Endothelial cell of umbilical vein (primary cell): ENCODE measurements at regions of chr4 and their contacts with region 1.

Region 1: GRCh38 chr4:77095101-77095821 is 19.5 kb upstream of the CCNI start:
- DNase-seq: peak; percentile 68
- H3K4me3 ChIP-seq: no peak overlapping the region
- H3K27ac ChIP-seq: no peak overlapping the region
- H3K4me1 ChIP-seq: peaks cover 24% of the 10 kb centered on the region
- H3K27me3 ChIP-seq: peaks cover 0 to 4% of the 10 kb centered on the region in 2 experiments
- CTCF ChIP-seq: peak; percentile 85 to 92
- POLR2A ChIP-seq: no peak

Region 2: DNA sequence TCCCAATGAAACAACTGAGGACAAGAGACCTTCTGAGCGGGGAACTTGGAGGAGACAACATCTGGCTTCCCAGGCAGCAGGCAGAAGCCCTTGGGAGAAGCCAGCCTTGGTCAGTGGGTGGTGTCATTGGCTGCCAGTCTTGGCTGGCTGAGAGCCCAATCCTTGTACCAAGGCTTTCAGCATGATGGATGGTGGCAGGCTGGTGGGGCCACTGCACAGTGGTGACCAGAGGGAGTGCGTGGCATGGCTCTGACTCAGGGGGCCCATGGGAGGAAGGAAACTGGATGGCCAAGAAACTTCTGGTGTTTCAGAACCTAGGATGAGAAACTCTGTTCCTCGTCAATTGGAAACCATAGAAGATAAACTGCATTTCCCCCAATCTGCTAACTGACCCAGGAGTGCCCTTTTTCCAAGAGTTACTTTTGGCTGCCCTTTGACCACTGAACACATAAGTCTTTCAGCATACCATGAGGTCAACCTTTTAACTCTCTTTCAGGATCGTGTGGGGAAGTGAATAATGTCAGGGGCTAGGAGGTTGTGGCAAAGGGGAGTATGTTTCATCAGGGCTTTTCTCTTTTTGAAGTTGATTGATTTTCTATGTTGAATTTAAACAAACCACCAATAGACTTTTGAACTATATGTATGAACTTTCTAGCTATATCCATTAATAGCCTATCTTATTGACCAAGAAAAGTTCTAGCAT is 258.2 kb before region 1 on chr4:
- CTCF ChIA-PET with region 1: no interaction called
- POLR2A ChIA-PET with region 1: no interaction called
- dilution Hi-C with region 1: no loop called
- intact Hi-C with region 1: no loop called
- DNase-seq: no peak
- H3K4me3 ChIP-seq: no peak overlapping the region
- H3K27ac ChIP-seq: no peak overlapping the region
- H3K4me1 ChIP-seq: peaks cover 3% of the 10 kb centered on the region
- H3K27me3 ChIP-seq: no peaks in the 10 kb centered on the region
- CTCF ChIP-seq: no peak
- POLR2A ChIP-seq: no peak

Region 3: DNA sequence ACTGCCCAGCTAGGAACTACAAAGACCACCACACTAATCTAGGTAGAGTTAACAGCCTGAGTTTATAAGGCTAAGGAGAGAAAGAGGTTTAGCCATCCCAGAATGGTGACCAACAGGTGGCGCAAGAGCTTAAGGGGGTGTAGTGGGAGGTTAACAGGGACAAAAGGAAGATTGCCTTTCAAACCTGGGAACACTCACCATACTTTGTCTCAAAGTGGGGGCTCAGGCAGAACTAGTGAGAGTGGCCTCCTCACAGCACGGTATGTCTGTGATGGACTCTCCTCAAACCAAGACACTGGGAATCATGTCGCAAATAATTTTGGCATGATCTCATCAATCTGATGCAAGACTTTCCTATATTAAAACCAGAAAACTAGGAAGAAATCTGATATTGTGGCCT is 42.9 kb before region 1 on chr4:
- CTCF ChIA-PET with region 1: interaction called, 12 read pairs
- POLR2A ChIA-PET with region 1: interaction called, 6 read pairs
- dilution Hi-C with region 1: no loop called
- intact Hi-C with region 1: no loop called
- DNase-seq: peak; percentile 58
- H3K4me3 ChIP-seq: no peak overlapping the region
- H3K27ac ChIP-seq: no peak overlapping the region
- H3K4me1 ChIP-seq: peaks cover 3% of the 10 kb centered on the region
- H3K27me3 ChIP-seq: no peaks in the 10 kb centered on the region
- CTCF ChIP-seq: peak; percentile 66 to 70
- POLR2A ChIP-seq: no peak

Region 4: GRCh38 chr4:77075869-77076799 is 19.1 kb before region 1 on chr4 and contains the start of gene CCNI:
- CTCF ChIA-PET with region 1: interaction called, 71 read pairs
- POLR2A ChIA-PET with region 1: interaction called, 4 read pairs
- dilution Hi-C with region 1: no loop called
- intact Hi-C with region 1: loop called (anchors 1 kb)
- DNase-seq: peak; percentile 99
- H3K4me3 ChIP-seq: peak within 1 kb of the TSS; percentile 83 to 98 (median 90)
- H3K27ac ChIP-seq: peak within 1 kb of the TSS; percentile 98
- H3K4me1 ChIP-seq: peaks cover 22% of the 10 kb centered on the region
- H3K27me3 ChIP-seq: no peaks in the 10 kb centered on the region
- CTCF ChIP-seq: no peak
- POLR2A ChIP-seq: peak; percentile 94
- total RNA-seq, gene CCNI: 212 and 227 TPM in 2 replicates

Region 5: GRCh38 chr4:77110730-77111129 is 15.5 kb after region 1 on chr4:
- CTCF ChIA-PET with region 1: interaction called, 14 read pairs
- POLR2A ChIA-PET with region 1: no interaction called
- dilution Hi-C with region 1: no loop called
- intact Hi-C with region 1: no loop called
- DNase-seq: no peak
- H3K4me3 ChIP-seq: no peak overlapping the region
- H3K27ac ChIP-seq: no peak overlapping the region
- H3K4me1 ChIP-seq: no peaks in the 10 kb centered on the region
- H3K27me3 ChIP-seq: peaks cover 23 to 30% of the 10 kb centered on the region in 2 experiments
- CTCF ChIP-seq: no peak
- POLR2A ChIP-seq: no peak

Region 6: DNA sequence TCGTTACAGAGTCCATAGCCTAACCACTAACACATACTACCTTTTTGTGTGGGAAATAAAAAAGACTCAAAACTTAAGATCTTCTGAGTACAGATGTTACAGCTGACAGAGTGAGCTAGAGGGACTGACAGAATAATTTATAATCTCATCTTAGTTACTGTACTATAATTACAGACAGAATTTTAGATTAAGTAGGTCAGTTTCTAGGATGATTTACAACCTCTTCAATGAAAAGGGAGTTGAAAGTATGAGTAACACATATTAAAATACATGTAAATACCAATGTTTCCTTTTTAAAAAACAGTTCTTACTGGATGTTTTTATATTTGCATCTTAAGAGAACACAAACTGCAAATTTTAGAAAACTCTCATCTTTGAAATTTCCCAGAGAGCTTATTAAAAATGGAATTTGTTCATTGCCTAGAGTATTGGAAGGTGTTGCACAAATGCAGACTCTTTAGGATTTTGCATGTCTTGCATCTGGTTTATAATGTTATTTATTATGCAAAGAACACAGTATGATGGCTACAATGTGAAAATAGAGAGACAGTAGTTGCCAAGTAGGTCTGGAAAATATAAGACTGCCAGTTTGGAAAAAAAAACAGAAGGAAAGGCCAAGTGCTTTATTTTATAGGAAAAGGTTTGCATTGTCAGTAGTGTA is 37.5 kb after region 1 on chr4:
- CTCF ChIA-PET with region 1: interaction called, 20 read pairs
- POLR2A ChIA-PET with region 1: no interaction called
- dilution Hi-C with region 1: no loop called
- intact Hi-C with region 1: no loop called
- DNase-seq: no peak
- H3K4me3 ChIP-seq: no peak overlapping the region
- H3K27ac ChIP-seq: no peak overlapping the region
- H3K4me1 ChIP-seq: peaks cover 3% of the 10 kb centered on the region
- H3K27me3 ChIP-seq: peaks cover 13 to 18% of the 10 kb centered on the region in 2 experiments
- CTCF ChIP-seq: no peak
- POLR2A ChIP-seq: no peak

Region 7: DNA sequence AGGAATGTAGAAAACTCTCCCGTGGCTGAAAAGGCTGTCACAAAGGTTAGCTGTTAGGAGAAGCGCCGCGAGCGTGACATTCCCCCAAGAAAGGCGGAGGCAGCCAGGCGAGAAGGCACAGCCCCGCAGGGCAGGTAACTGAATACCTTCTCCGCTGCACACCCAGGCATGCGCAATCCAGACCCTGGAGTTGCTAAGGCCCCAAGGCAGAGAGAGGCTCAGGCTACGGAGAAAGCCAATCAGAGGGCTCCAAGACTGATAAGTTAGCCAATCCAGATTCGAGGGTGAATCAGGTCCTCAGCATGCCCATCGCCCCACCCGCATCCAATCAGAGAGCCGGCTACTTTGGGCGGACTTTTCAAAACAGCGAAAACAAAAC is 61.3 kb after region 1 on chr4:
- CTCF ChIA-PET with region 1: interaction called, 63 read pairs
- POLR2A ChIA-PET with region 1: interaction called, 4 read pairs
- dilution Hi-C with region 1: no loop called
- intact Hi-C with region 1: loop called (anchors 1 kb)
- DNase-seq: peak; percentile 99
- H3K4me3 ChIP-seq: peak overlapping the region; percentile 75 to 98 (median 80)
- H3K27ac ChIP-seq: peak overlapping the region; percentile 86
- H3K4me1 ChIP-seq: peaks cover 15% of the 10 kb centered on the region
- H3K27me3 ChIP-seq: peaks cover 19 to 22% of the 10 kb centered on the region in 2 experiments
- CTCF ChIP-seq: no peak
- POLR2A ChIP-seq: peak; percentile 57

Region 8: DNA sequence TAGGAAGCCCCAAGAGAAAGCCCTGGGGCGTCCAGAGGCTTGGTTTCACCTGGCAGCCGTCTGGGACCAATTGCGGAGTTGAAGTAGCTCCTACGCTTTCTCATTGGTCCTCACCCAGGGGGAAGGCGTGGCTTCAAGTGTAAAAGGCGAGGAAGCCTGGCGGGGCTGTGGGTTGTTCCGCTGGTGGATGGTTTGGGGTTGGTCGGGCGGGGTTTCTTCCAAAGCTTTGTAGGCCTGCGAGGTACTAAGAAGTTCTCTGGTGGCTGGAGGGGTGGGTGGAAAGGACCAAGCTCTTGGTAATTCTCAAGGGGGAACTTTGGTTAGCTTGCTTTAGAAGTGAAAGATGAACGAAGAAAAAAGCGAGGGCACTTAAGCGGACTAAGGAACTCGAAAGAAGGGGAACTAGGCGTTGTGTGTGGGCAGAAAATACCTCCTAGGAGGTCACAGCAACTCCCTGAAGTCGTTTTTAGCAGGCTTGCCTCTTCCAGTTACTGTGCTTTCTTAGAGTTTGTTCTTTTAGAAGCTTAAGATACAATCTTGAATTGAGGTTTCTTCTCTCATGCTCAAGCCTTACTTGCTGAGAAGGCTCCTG is 98.3 kb after region 1 on chr4:
- CTCF ChIA-PET with region 1: interaction called, 10 read pairs
- POLR2A ChIA-PET with region 1: no interaction called
- dilution Hi-C with region 1: no loop called
- intact Hi-C with region 1: no loop called
- DNase-seq: no peak
- H3K4me3 ChIP-seq: no peak overlapping the region
- H3K27ac ChIP-seq: no peak overlapping the region
- H3K4me1 ChIP-seq: no peaks in the 10 kb centered on the region
- H3K27me3 ChIP-seq: peaks cover 35 to 46% of the 10 kb centered on the region in 2 experiments
- CTCF ChIP-seq: no peak
- POLR2A ChIP-seq: no peak

Region 9: GRCh38 chr4:78197947-78198346 is 1102.7 kb after region 1 on chr4:
- CTCF ChIA-PET with region 1: no interaction called
- POLR2A ChIA-PET with region 1: no interaction called
- dilution Hi-C with region 1: no loop called
- intact Hi-C with region 1: no loop called
- DNase-seq: no peak
- H3K4me3 ChIP-seq: no peak overlapping the region
- H3K27ac ChIP-seq: no peak overlapping the region
- H3K4me1 ChIP-seq: no peaks in the 10 kb centered on the region
- H3K27me3 ChIP-seq: no peaks in the 10 kb centered on the region
- CTCF ChIP-seq: no peak
- POLR2A ChIP-seq: no peak